ENCODE measurements at regions of chr2 and their contacts with region 1.

Region 1: DNA sequence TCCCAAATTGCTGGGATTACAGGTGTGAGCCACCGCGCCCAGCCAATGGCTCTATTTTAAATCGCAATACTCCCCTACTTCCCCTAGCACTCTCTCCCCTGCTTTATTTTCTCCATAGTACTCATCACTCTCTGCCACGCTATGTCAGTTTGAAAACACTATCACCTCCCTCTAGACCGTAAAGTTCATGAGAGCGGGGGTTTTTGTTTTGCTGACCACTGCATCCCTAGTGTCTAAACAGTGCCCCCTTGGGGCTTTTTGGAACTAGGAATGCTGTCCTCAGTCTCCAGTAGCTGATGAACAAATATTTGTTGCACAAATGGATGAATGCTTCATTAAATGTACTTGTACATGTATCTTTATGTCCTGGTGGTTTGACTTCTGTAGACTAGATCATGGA is 44.1 kb downstream of the ATOH8 start:
- DNase-seq: peak; percentile 66
- H3K4me3 ChIP-seq: no peak overlapping the region
- H3K27ac ChIP-seq: no peak overlapping the region
- H3K4me1 ChIP-seq: peaks cover 0 to 43% (median 39%) of the 10 kb centered on the region in 4 donors
- H3K27me3 ChIP-seq: no peaks in the 10 kb centered on the region
- CTCF ChIP-seq: peak; percentile 29 to 58 (median 51)
- EP300 ChIP-seq: no peak
- POLR2A ChIP-seq: no peak

Region 2: DNA sequence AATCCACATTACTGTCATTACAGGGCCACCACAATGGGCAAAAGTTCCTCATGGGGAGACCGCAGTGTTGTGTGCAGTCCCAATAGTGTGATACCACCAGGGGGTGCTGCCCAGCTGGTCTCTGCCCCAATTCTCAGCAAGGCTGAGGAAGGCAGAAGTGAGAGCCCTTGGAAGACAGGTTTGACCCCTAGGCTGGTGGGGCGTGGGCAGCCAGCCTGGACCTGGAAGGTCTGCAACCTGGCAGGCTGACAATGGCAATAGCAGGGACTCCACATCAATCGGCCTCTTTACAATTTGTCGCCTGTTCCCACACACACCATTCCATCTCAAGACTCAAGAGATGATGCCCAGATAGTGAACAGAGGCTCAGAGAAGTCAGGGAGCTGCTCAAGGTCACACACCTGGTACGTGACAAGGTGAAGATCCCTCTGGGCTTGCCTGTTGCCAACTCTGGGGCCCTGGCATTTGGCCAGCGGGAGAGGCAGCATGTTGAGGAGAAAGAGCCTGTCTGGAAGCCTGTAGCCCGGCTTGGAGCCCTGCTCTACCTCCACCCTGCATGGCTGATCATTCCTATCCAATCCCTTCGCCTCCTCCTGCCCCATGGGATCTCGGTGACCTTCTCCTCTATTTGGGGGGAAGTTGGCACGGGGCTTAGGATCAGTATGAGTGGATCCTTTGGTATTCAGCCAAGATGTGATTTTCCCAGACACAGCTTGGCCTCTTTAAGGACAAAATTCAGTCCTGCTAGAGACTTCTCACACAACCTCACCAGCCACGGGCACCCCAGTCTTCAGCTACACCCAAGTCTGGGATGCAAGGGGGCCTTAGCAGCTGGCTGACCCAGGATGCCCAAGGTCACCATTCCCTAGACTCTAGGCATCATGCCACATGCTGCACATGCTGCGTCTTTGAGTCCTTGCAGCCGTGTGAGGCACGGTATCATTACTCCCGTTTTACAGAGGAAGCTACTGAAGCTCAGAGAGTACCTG is 47.0 kb before region 1 on chr2:
- intact Hi-C with region 1: loop called (anchors 1 kb)
- DNase-seq: peak; percentile 87
- H3K4me3 ChIP-seq: no peak overlapping the region
- H3K27ac ChIP-seq: peak overlapping the region in 3 of 4 donors; percentile 23 to 74 (median 26)
- H3K4me1 ChIP-seq: peaks cover 0 to 72% (median 63%) of the 10 kb centered on the region in 4 donors
- H3K27me3 ChIP-seq: no peaks in the 10 kb centered on the region
- CTCF ChIP-seq: peak; percentile 72 to 82 (median 74)
- EP300 ChIP-seq: no peak
- POLR2A ChIP-seq: no peak